Testis (tissue), 5 donors: ENCODE measurements at regions of chr10 and their contacts with region 1.

Region 1: DNA sequence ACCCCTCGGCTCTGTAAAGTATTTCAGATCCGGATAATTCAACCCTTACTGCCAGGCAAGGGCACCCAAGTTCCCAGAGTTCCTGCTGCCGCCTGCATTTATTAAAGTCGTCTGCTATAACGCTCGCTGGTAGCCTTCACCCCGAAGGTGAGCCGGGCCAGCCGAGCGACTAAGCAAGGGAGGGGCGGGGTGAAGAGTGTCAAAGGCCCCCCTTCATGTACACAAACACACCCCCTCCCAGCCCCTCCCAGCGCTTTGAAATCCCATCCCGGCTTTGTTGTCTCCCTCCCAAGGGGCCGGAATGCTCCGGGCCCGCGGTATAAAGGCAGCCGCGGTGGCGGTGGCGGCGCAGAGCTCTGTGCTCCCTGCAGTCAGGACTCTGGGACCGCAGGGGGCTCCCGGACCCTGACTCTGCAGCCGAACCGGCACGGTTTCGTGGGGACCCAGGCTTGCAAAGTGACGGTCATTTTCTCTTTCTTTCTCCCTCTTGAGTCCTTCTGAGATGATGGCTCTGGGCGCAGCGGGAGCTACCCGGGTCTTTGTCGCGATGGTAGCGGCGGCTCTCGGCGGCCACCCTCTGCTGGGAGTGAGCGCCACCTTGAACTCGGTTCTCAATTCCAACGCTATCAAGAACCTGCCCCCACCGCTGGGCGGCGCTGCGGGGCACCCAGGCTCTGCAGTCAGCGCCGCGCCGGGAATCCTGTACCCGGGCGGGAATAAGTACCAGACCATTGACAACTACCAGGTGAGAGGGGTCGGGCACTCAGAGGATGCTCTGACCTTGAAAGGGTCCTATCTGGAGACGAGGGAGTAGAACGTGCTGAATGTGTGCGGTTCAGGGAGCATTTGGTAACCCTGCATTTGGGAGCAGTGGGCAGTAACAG is at the start of gene DKK1:
- DNase-seq: peak; percentile 77
- H3K4me3 ChIP-seq: peak within 1 kb of the TSS; percentile 40 to 57
- H3K27ac ChIP-seq: no peak within 1 kb of the TSS
- H3K4me1 ChIP-seq: peaks cover 10% of the 10 kb centered on the region
- H3K27me3 ChIP-seq: no peaks in the 10 kb centered on the region
- CTCF ChIP-seq: peak; percentile 10 to 65 (median 30)
- POLR2A ChIP-seq: no peak
- total RNA-seq, gene DKK1: 1.5 to 4.1 TPM

Region 2: GRCh38 chr10:52488606-52489485 is 174.7 kb after region 1 on chr10:
- intact Hi-C with region 1: loop called (anchors 10 kb)
- DNase-seq: no peak
- H3K4me3 ChIP-seq: no peak overlapping the region
- H3K27ac ChIP-seq: no peak overlapping the region
- H3K4me1 ChIP-seq: no peaks in the 10 kb centered on the region
- H3K27me3 ChIP-seq: peaks cover 3% of the 10 kb centered on the region
- CTCF ChIP-seq: peak; percentile 31 to 69 (median 35)
- POLR2A ChIP-seq: no peak